Naive thymus-derived CD4-positive, alpha-beta T cell (primary cell): ENCODE measurements at regions of chr6 and their contacts with region 1.

Region 1: DNA sequence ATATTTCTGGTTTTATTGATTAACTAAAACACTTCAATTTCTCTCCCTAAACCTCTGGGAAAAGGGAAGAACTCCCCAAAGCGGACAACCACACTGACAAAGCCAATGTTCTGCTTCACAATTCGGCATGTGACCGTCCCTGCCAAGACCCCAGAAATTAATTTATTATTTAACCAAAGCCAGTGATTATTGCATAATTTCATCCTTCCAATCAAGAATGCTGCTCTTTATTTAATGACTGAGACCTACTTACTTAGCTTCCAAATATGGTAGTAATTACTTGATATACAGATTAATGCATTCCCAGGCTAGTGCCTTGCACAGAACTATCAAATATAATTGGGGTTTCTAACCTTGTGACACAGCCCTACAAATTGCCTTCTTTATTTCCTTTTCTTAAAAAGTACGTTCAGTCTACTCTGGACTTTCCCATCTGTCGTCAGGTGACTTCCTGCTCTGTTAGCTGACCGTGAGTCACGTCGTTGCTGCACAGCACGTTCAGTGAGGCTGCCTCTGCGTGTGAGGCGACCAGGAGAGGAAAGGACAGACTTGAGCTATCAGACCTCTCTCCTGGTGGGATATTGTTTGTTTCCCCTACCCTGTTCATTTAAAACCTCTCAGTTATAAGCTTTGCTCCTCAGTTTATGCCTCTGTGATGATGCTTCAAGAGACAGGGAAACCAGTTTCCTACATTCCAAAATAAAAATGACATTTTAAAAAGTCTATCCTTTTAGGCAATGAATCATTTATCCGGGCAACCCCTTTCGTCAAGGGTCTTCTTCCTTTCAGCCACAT is 55.7 kb upstream of the TNFAIP3 start:
- DNase-seq: peak; percentile 42 to 85 (median 53)
- ATAC-seq: peak; percentile 94
- H3K4me3 ChIP-seq: peak overlapping the region; percentile 14
- H3K4me3 Mint-ChIP-seq: peak overlapping the region; percentile 71 to 84 (median 78)
- H3K27ac ChIP-seq: peak overlapping the region; percentile 60
- H3K27ac Mint-ChIP-seq: peak overlapping the region; percentile 89 to 96 (median 93)
- H3K4me1 ChIP-seq: peaks cover 17 to 23% of the 10 kb centered on the region in 2 donors
- H3K4me1 Mint-ChIP-seq: peaks cover 22 to 56% (median 46%) of the 10 kb centered on the region in 7 donors
- H3K27me3 ChIP-seq: no peaks in the 10 kb centered on the region
- H3K27me3 Mint-ChIP-seq: no peaks in the 10 kb centered on the region

Region 2: GRCh38 chr6:136582711-136583471 is 1228.4 kb before region 1 on chr6:
- CTCF ChIA-PET with region 1: no interaction called
- POLR2A ChIA-PET with region 1: no interaction called
- intact Hi-C with region 1: no loop called
- DNase-seq: no peak
- ATAC-seq: peak; percentile 72
- H3K4me3 ChIP-seq: no peak overlapping the region
- H3K4me3 Mint-ChIP-seq: no peak overlapping the region
- H3K27ac ChIP-seq: no peak overlapping the region
- H3K27ac Mint-ChIP-seq: no peak overlapping the region
- H3K4me1 ChIP-seq: no peaks in the 10 kb centered on the region
- H3K4me1 Mint-ChIP-seq: peaks cover 0 to 2% (median 0%) of the 10 kb centered on the region in 7 donors
- H3K27me3 ChIP-seq: no peaks in the 10 kb centered on the region
- H3K27me3 Mint-ChIP-seq: no peaks in the 10 kb centered on the region

Region 3: GRCh38 chr6:137791281-137792159 is 19.8 kb before region 1 on chr6:
- CTCF ChIA-PET with region 1: interaction called, 3 read pairs
- POLR2A ChIA-PET with region 1: no interaction called
- intact Hi-C with region 1: loop called in 1 of 2 experiments (anchors 2 kb)
- DNase-seq: peak in 1 of 9 donors; percentile 26
- ATAC-seq: no peak
- H3K4me3 ChIP-seq: no peak overlapping the region
- H3K4me3 Mint-ChIP-seq: peak overlapping the region in 1 of 10 donors; percentile 45
- H3K27ac ChIP-seq: no peak overlapping the region
- H3K27ac Mint-ChIP-seq: peak overlapping the region in 8 of 9 donors; percentile 1 to 79 (median 36)
- H3K4me1 ChIP-seq: peaks cover 7 to 28% of the 10 kb centered on the region in 2 donors
- H3K4me1 Mint-ChIP-seq: peaks cover 27 to 65% (median 50%) of the 10 kb centered on the region in 7 donors
- H3K27me3 ChIP-seq: no peaks in the 10 kb centered on the region
- H3K27me3 Mint-ChIP-seq: no peaks in the 10 kb centered on the region

Region 4: GRCh38 chr6:139623372-139623771 is 1812.1 kb after region 1 on chr6:
- CTCF ChIA-PET with region 1: no interaction called
- POLR2A ChIA-PET with region 1: no interaction called
- intact Hi-C with region 1: no loop called
- DNase-seq: no peak
- ATAC-seq: no peak
- H3K4me3 ChIP-seq: no peak overlapping the region
- H3K4me3 Mint-ChIP-seq: no peak overlapping the region
- H3K27ac ChIP-seq: no peak overlapping the region
- H3K27ac Mint-ChIP-seq: no peak overlapping the region
- H3K4me1 ChIP-seq: no peaks in the 10 kb centered on the region
- H3K4me1 Mint-ChIP-seq: peaks cover 0 to 4% (median 0%) of the 10 kb centered on the region in 7 donors
- H3K27me3 ChIP-seq: no peaks in the 10 kb centered on the region
- H3K27me3 Mint-ChIP-seq: peaks cover 5 to 27% (median 19%) of the 10 kb centered on the region in 5 donors